ENCODE measurements at regions of chr2 and their contacts with region 1.

Region 1: GRCh38 chr2:190679813-190680591 is 31.1 kb downstream of the NAB1 start:
- DNase-seq: peak; percentile 62
- ATAC-seq: peak; percentile 50
- H3K4me3 Mint-ChIP-seq: peak overlapping the region; percentile 40
- H3K27ac Mint-ChIP-seq: peak overlapping the region; percentile 79
- H3K4me1 Mint-ChIP-seq: peaks cover 40% of the 10 kb centered on the region
- H3K27me3 Mint-ChIP-seq: no peaks in the 10 kb centered on the region

Region 2: GRCh38 chr2:190235101-190235500 is 444.9 kb before region 1 on chr2:
- CTCF ChIA-PET with region 1: no interaction called
- DNase-seq: no peak
- ATAC-seq: no peak
- H3K4me3 Mint-ChIP-seq: no peak overlapping the region
- H3K27ac Mint-ChIP-seq: no peak overlapping the region
- H3K4me1 Mint-ChIP-seq: no peaks in the 10 kb centered on the region
- H3K27me3 Mint-ChIP-seq: no peaks in the 10 kb centered on the region

Region 3: GRCh38 chr2:190545555-190546385 is 134.2 kb before region 1 on chr2:
- CTCF ChIA-PET with region 1: no interaction called
- DNase-seq: no peak
- ATAC-seq: no peak
- H3K4me3 Mint-ChIP-seq: no peak overlapping the region
- H3K27ac Mint-ChIP-seq: no peak overlapping the region
- H3K4me1 Mint-ChIP-seq: no peaks in the 10 kb centered on the region
- H3K27me3 Mint-ChIP-seq: no peaks in the 10 kb centered on the region

Region 4: GRCh38 chr2:190599073-190599472 is 80.9 kb before region 1 on chr2:
- CTCF ChIA-PET with region 1: no interaction called
- DNase-seq: no peak
- ATAC-seq: no peak
- H3K4me3 Mint-ChIP-seq: no peak overlapping the region
- H3K27ac Mint-ChIP-seq: no peak overlapping the region
- H3K4me1 Mint-ChIP-seq: peaks cover 2% of the 10 kb centered on the region
- H3K27me3 Mint-ChIP-seq: no peaks in the 10 kb centered on the region

Region 5: DNA sequence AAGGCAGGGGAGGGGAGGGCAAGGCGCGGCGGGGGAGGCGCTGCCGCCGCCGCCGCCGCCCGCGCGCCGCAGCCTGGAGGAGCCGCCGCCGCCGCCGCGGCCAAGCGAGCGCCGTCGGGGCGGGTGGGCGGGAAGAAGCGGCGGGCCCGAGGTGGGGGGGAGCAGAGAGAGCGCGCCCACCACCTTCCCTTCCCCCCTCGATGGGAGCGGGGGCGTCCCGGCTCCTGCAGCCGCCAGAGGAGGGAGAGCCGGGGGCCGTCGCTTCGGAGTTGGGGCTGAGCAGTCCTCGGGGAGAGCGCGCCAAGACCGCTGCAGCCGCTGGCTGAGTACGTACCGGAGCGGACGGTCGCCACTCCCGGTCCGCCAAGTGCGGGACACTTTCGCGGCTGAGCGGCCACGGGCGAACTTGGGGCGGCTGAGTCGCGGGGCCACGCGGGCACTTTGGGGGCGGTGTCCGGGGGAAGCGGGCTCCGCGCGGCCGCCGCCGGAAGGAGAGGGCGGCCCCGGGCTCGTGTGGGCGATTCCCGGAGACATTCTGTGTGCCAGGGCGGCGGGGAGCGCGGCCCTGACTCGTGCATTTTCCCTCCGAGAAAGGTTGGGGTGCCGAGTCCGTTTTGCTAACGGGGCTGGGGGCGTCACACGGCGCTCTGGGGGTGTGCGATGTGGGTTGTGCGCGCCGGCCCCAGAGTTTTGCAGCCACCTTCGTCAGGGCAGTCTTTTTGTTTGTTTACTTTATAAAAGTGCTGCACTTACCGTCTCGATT is 30.8 kb before region 1 on chr2 and contains the start of gene NAB1:
- CTCF ChIA-PET with region 1: interaction called, 15 read pairs
- DNase-seq: peak; percentile 70
- ATAC-seq: peak; percentile 66
- H3K4me3 Mint-ChIP-seq: peak within 1 kb of the TSS; percentile 87
- H3K27ac Mint-ChIP-seq: peak within 1 kb of the TSS; percentile 86
- H3K4me1 Mint-ChIP-seq: peaks cover 36% of the 10 kb centered on the region
- H3K27me3 Mint-ChIP-seq: no peaks in the 10 kb centered on the region
- total RNA-seq, gene NAB1: 36.8 to 38.4 TPM

Region 6: DNA sequence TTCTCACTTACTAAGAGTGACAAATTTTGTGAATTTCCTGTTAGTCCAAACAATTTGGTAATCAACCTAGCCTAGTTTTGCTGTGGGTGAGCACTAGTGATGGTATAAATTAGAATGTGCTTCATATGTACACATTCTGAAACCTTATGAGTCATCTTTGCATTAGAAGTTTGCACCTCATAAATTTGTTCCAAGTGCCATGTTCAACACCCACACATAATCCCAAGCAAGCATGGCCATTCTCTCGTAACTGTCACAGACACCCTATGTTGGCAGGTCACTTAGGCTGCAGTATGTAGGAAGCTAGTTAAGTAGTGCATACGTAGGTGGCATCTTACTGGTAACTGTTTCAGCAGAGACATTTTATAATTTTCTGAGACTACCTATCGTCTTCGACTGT is 15.7 kb after region 1 on chr2:
- CTCF ChIA-PET with region 1: interaction called, 15 read pairs
- DNase-seq: peak; percentile 56
- ATAC-seq: peak; percentile 88
- H3K4me3 Mint-ChIP-seq: no peak overlapping the region
- H3K27ac Mint-ChIP-seq: no peak overlapping the region
- H3K4me1 Mint-ChIP-seq: peaks cover 36% of the 10 kb centered on the region
- H3K27me3 Mint-ChIP-seq: no peaks in the 10 kb centered on the region

Measured in activated CD8-positive, alpha-beta memory T cell treated with anti-CD3 and anti-CD28 coated beads, Interleukin-2, amount 10 ng/mL, durations not matched to agents 7 days and 5 days (primary cell).